Esophagus muscularis mucosa (tissue), 4 donors: ENCODE measurements at regions of chr16 and their contacts with region 1.

Region 1: DNA sequence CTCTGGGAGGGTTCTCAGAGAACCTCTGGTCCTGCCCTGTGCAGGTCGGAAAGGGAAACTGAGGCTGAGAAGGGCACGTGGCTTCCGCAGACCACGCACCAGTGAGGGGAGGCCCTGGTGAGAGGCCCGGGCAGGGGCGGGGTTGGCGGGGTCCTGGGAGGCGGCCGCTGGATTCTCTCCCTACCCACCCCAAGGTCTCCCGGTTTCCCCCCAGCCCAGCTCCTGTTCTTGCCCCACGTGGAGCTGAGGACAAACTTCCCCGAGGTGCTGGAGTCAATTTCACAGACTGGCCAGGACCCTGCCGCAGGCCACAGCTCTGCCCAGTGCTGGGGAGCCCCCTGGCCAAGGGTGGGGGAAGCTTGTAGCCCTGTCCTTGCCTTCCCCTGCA is 11.5 kb downstream of the CCL17 start:
- DNase-seq: no peak
- H3K4me3 ChIP-seq: peak overlapping the region in 1 of 4 donors; percentile 42
- H3K27ac ChIP-seq: peak overlapping the region in 2 of 4 donors; percentile 14 to 71
- H3K4me1 ChIP-seq: peaks cover 26 to 36% (median 32%) of the 10 kb centered on the region in 4 donors
- H3K27me3 ChIP-seq: no peaks in the 10 kb centered on the region
- CTCF ChIP-seq: no peak
- EP300 ChIP-seq: no peak
- POLR2A ChIP-seq: no peak

Region 2: GRCh38 chr16:57372372-57373116 is 43.6 kb before region 1 on chr16 and contains the start of gene CX3CL1:
- intact Hi-C with region 1: loop called (anchors 5 kb)
- DNase-seq: no peak
- H3K4me3 ChIP-seq: peak within 1 kb of the TSS; percentile 75 to 83 (median 80)
- H3K27ac ChIP-seq: peak within 1 kb of the TSS; percentile 95 to 97 (median 96)
- H3K4me1 ChIP-seq: peaks cover 34 to 63% (median 58%) of the 10 kb centered on the region in 4 donors
- H3K27me3 ChIP-seq: no peaks in the 10 kb centered on the region
- CTCF ChIP-seq: peak in 1 of 3 experiments; percentile 40
- EP300 ChIP-seq: no peak
- POLR2A ChIP-seq: peak; percentile 58
- total RNA-seq, gene CX3CL1: 26.8 to 40.4 (median 29.9) TPM

Region 3: GRCh38 chr16:57519796-57520360 is 103.8 kb after region 1 on chr16:
- intact Hi-C with region 1: loop called (anchors 5 kb)
- DNase-seq: no peak
- H3K4me3 ChIP-seq: no peak overlapping the region
- H3K27ac ChIP-seq: no peak overlapping the region
- H3K4me1 ChIP-seq: peaks cover 0 to 7% (median 4%) of the 10 kb centered on the region in 4 donors
- H3K27me3 ChIP-seq: no peaks in the 10 kb centered on the region
- CTCF ChIP-seq: peak; percentile 84 to 98 (median 87)
- EP300 ChIP-seq: no peak
- POLR2A ChIP-seq: no peak